Left cardiac atrium (tissue), 4 donors: ENCODE measurements at regions of chr17 and their contacts with region 1.

Region 1: GRCh38 chr17:55726440-55726839 is 3.8 kb upstream of the TMEM100 start:
- DNase-seq: peak; percentile 83
- ATAC-seq: peak; percentile 62 to 77

Region 2: DNA sequence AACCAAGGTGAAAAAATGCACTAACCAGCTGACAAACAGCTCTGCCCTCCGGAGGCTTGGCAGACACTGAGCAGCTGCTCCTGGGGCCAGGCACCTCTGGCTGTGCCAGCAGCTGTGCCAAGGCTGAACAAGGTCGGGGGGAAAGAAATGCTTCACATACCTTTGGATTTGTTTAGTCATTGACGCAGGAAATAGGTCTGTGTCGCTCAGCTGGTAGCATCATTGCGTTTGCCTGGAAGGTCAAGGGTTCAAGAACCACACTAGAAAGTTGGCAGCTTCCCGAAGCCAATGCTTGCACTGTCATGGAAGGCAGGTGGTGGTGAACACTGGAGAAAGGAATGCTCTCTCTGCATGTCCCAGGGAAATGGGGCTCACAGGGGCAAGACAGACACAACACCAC is 87.9 kb after region 1 on chr17:
- intact Hi-C with region 1: loop called in 1 of 2 experiments (anchors 10 kb)
- DNase-seq: peak; percentile 52
- ATAC-seq: peak; percentile 89 to 92